ENCODE measurements at regions of chr14 and their contacts with region 1.

Region 1: GRCh38 chr14:56117765-56118610 is at the start of gene PELI2:
- DNase-seq: peak; percentile 94
- H3K4me3 Mint-ChIP-seq: peak within 1 kb of the TSS; percentile 93
- H3K27ac Mint-ChIP-seq: peak within 1 kb of the TSS; percentile 67
- H3K4me1 Mint-ChIP-seq: peaks cover 31% of the 10 kb centered on the region
- H3K27me3 Mint-ChIP-seq: peaks cover 50% of the 10 kb centered on the region
- total RNA-seq, gene PELI2: 2.8 and 3.0 TPM in 2 replicates

Region 2: DNA sequence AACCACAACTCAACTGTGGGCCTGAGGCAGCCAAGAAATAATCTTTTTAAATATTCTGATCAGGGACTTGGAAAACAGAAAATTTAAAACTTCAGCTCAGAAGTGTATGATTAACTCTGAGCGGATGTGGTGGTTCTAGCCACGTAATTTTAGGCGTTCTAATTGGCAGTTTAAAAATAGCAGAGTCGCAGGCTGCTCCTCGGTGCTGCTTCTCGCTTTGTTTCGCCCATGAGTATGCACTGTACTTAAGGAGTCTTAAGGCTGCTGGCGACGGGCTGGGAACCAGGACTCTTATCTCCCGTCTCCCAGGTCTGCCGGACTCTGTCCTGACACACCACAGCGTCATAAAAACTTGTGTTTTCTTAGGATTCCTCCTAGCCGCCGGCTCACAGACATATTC is 113.2 kb before region 1 on chr14:
- intact Hi-C with region 1: loop called (anchors 2 kb)
- DNase-seq: peak; percentile 76
- H3K4me3 Mint-ChIP-seq: peak overlapping the region; percentile 66
- H3K27ac Mint-ChIP-seq: peak overlapping the region; percentile 51
- H3K4me1 Mint-ChIP-seq: peaks cover 26% of the 10 kb centered on the region
- H3K27me3 Mint-ChIP-seq: peaks cover 43% of the 10 kb centered on the region

Region 3: GRCh38 chr14:56131865-56132833 is 14.2 kb after region 1 on chr14:
- intact Hi-C with region 1: loop called (anchors 1 kb)
- DNase-seq: no peak
- H3K4me3 Mint-ChIP-seq: no peak overlapping the region
- H3K27ac Mint-ChIP-seq: peak overlapping the region; percentile 18
- H3K4me1 Mint-ChIP-seq: peaks cover 20% of the 10 kb centered on the region
- H3K27me3 Mint-ChIP-seq: peaks cover 12% of the 10 kb centered on the region

Region 4: DNA sequence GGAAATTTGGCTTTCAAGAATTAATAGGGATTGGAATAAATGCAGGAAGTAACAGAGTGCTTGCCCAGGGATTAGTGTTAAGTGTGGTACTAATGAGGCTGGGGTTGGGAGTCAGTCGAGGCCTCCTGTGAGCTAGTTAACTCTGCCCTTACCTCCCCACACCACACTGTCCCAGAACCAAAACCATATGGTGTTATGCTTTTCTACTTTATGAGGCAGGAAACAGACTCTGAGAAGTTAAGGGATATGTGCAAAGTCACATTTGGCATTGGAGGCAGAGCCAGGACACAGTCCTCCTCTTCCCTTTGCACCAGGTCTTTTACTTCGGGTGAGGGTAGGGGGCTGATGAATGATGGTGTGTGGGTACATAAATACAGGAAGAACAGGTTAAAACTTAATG is 42.1 kb after region 1 on chr14:
- intact Hi-C with region 1: no loop called
- DNase-seq: no peak
- H3K4me3 Mint-ChIP-seq: no peak overlapping the region
- H3K27ac Mint-ChIP-seq: no peak overlapping the region
- H3K4me1 Mint-ChIP-seq: peaks cover 4% of the 10 kb centered on the region
- H3K27me3 Mint-ChIP-seq: no peaks in the 10 kb centered on the region

Region 5: GRCh38 chr14:56172571-56172971 is 54.6 kb after region 1 on chr14:
- intact Hi-C with region 1: loop called (anchors 2 kb)
- DNase-seq: no peak
- H3K4me3 Mint-ChIP-seq: peak overlapping the region; percentile 71
- H3K27ac Mint-ChIP-seq: peak overlapping the region; percentile 79
- H3K4me1 Mint-ChIP-seq: peaks cover 42% of the 10 kb centered on the region
- H3K27me3 Mint-ChIP-seq: no peaks in the 10 kb centered on the region

Region 6: GRCh38 chr14:56195704-56196103 is 77.7 kb after region 1 on chr14:
- intact Hi-C with region 1: loop called (anchors 2 kb)
- DNase-seq: peak; percentile 77
- H3K4me3 Mint-ChIP-seq: peak overlapping the region; percentile 59
- H3K27ac Mint-ChIP-seq: peak overlapping the region; percentile 78
- H3K4me1 Mint-ChIP-seq: peaks cover 24% of the 10 kb centered on the region
- H3K27me3 Mint-ChIP-seq: no peaks in the 10 kb centered on the region

Region 7: GRCh38 chr14:56339855-56340701 is 222.1 kb after region 1 on chr14:
- intact Hi-C with region 1: loop called (anchors 10 kb)
- DNase-seq: peak; percentile 87
- H3K4me3 Mint-ChIP-seq: no peak overlapping the region
- H3K27ac Mint-ChIP-seq: no peak overlapping the region
- H3K4me1 Mint-ChIP-seq: peaks cover 9% of the 10 kb centered on the region
- H3K27me3 Mint-ChIP-seq: no peaks in the 10 kb centered on the region

Measured in activated CD4-positive, alpha-beta T cell treated with anti-CD3 and anti-CD28 coated beads, Interleukin-2, amount 10 ng/mL, durations not matched to agents 24 days and 14 days (primary cell).